ENCODE measurements at regions of chr1 and their contacts with region 1.

Region 1: GRCh38 chr1:101238681-101239094 is 1.9 kb downstream of the S1PR1 start:
- DNase-seq: peak; percentile 53
- H3K4me3 ChIP-seq: peak overlapping the region; percentile 74
- CTCF ChIP-seq: peak; percentile 98

Region 2: DNA sequence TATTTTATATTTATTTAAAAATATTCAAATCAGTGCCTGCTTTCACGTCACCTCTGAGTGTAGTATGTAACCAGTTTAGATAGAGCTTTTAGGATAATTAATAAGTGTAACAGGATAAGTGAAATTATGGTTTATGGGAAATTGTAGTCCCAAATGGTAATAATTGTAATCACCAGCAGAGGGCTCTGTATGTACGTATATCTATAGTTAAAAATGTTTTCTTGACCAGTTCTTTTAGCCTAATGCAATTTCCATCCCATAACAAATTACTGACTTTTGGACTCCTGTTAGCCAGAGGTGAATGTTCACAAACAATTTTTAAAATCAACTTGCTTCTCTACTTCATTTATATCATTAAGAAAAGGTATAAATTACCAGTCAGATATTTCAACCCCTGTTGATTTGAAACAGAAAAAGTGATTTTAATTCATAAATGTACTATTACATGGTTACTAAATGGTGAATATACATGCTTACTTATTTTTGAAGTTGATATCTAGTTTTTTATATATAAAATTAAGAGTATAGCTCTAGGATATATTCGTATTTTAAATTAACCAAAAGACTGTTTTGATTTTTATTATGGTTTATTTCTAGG is 317.5 kb before region 1 on chr1:
- CTCF ChIA-PET with region 1: interaction called, 47 read pairs
- POLR2A ChIA-PET with region 1: no interaction called
- DNase-seq: no peak
- H3K4me3 ChIP-seq: no peak overlapping the region
- CTCF ChIP-seq: peak; percentile 33

Region 3: GRCh38 chr1:100931716-100932115 is 307.0 kb before region 1 on chr1:
- CTCF ChIA-PET with region 1: interaction called, 12 read pairs
- POLR2A ChIA-PET with region 1: no interaction called
- DNase-seq: no peak
- H3K4me3 ChIP-seq: no peak overlapping the region
- CTCF ChIP-seq: no peak

Region 4: DNA sequence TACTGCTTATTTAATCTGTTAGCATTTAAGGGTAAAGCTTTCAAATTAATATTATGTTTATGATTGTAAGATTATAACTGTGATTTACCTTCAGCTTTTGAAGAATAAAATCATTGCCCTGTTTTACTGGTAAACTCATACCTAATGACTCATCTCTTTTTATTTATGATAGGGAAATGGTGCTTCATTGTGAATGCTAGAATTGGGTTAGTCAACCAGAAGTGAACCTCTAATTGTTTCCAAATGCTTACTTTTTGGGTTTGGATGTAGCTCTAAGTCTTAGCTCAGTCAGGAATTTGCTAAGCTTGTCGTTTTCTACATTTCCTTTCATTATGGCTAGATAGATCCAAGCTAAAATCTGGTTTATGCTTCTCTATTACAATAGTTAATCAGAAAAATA is 283.4 kb before region 1 on chr1:
- CTCF ChIA-PET with region 1: interaction called, 11 read pairs
- POLR2A ChIA-PET with region 1: no interaction called
- DNase-seq: peak; percentile 67
- H3K4me3 ChIP-seq: no peak overlapping the region
- CTCF ChIP-seq: no peak

Region 5: GRCh38 chr1:100989306-100990077 is 249.2 kb before region 1 on chr1:
- CTCF ChIA-PET with region 1: interaction called, 12 read pairs
- POLR2A ChIA-PET with region 1: no interaction called
- DNase-seq: peak; percentile 50
- H3K4me3 ChIP-seq: no peak overlapping the region
- CTCF ChIP-seq: no peak

Region 6: GRCh38 chr1:101025657-101026504 is 212.8 kb before region 1 on chr1 and contains the start of gene DPH5:
- CTCF ChIA-PET with region 1: interaction called, 18 read pairs
- POLR2A ChIA-PET with region 1: no interaction called
- DNase-seq: peak; percentile 59
- H3K4me3 ChIP-seq: peak within 1 kb of the TSS; percentile 79
- CTCF ChIP-seq: no peak

Region 7: GRCh38 chr1:101228424-101229134 is 10.1 kb before region 1 on chr1:
- CTCF ChIA-PET with region 1: interaction called, 19 read pairs
- POLR2A ChIA-PET with region 1: no interaction called
- DNase-seq: no peak
- H3K4me3 ChIP-seq: no peak overlapping the region
- CTCF ChIP-seq: no peak